Ascending aorta (tissue), 2 donors: ENCODE measurements at regions of chr9 and their contacts with region 1.

Region 1: GRCh38 chr9:27548055-27548741 is 18.6 kb upstream of the MOB3B start:
- DNase-seq: no peak
- H3K4me3 ChIP-seq: no peak overlapping the region
- H3K27ac ChIP-seq: no peak overlapping the region
- H3K4me1 ChIP-seq: no peaks in the 10 kb centered on the region
- H3K27me3 ChIP-seq: no peaks in the 10 kb centered on the region
- CTCF ChIP-seq: peak; percentile 27 to 62 (median 30)

Region 2: DNA sequence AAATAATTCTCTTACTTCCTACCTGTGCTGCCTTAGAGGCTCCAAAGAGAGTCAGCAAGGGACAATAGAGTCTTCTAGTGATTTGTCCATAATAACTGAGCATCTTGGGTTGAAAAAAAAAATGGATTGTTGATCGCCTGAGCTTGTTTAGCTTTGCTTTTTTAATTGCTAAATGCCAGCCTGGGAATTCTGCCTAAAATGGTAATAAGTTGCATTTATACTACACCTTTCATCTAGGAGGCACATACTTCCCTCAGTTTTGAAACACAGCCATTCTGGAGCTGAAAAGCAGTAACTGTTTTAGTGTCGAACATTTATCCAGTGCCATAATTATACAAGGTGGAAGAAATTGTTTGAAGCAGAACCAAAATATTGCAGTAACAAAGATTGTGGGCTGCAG is 1076.9 kb before region 1 on chr9:
- intact Hi-C with region 1: no loop called
- DNase-seq: no peak
- H3K4me3 ChIP-seq: no peak overlapping the region
- H3K27ac ChIP-seq: no peak overlapping the region
- H3K4me1 ChIP-seq: no peaks in the 10 kb centered on the region
- H3K27me3 ChIP-seq: no peaks in the 10 kb centered on the region
- CTCF ChIP-seq: no peak

Region 3: GRCh38 chr9:27333241-27334052 is 214.8 kb before region 1 on chr9:
- intact Hi-C with region 1: loop called (anchors 1 kb)
- DNase-seq: peak in 1 of 2 donors; percentile 85
- H3K4me3 ChIP-seq: no peak overlapping the region
- H3K27ac ChIP-seq: no peak overlapping the region
- H3K4me1 ChIP-seq: peaks cover 8 to 26% of the 10 kb centered on the region in 2 donors
- H3K27me3 ChIP-seq: no peaks in the 10 kb centered on the region
- CTCF ChIP-seq: peak; percentile 71 to 86 (median 80)

Region 4: GRCh38 chr9:27473111-27473529 is 75.1 kb before region 1 on chr9:
- intact Hi-C with region 1: loop called (anchors 5 kb)
- DNase-seq: peak in 1 of 2 donors; percentile 71
- H3K4me3 ChIP-seq: no peak overlapping the region
- H3K27ac ChIP-seq: peak overlapping the region in 1 of 2 donors; percentile 55
- H3K4me1 ChIP-seq: peaks cover 16 to 18% of the 10 kb centered on the region in 2 donors
- H3K27me3 ChIP-seq: no peaks in the 10 kb centered on the region
- CTCF ChIP-seq: no peak